CD4-positive, alpha-beta T cell (primary cell): ENCODE measurements at regions of chr2 and their contacts with region 1.

Region 1: DNA sequence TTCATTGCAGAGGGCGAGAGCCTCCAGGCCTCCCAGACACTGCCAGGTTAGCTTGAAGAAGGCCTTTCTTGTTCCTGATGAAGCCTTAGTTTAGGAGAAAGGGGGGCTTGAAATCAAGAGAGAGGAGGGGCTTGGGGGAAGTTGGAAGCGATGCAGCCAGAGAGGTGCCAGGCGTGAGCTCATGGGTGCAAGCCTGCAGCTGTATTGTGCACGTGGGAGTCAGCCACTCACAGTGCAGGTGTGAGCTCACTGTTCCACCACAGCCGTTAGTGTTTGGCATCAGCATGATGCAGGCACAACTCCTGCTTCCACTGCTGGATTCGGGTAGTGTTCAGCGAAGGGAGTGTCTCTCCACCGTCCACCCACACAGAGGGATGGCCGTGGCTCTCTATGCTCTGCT is 68.4 kb upstream of the ALPP start:
- DNase-seq: peak in 6 of 14 experiments; percentile 23 to 59 (median 46)
- ATAC-seq: peak; percentile 78
- H3K4me3 ChIP-seq: no peak overlapping the region
- H3K4me3 Mint-ChIP-seq: peak overlapping the region; percentile 65
- H3K27ac ChIP-seq: peak overlapping the region in 1 of 2 donors; percentile 51
- H3K27ac Mint-ChIP-seq: peak overlapping the region; percentile 89
- H3K4me1 ChIP-seq: peaks cover 53% of the 10 kb centered on the region
- H3K4me1 Mint-ChIP-seq: peaks cover 78% of the 10 kb centered on the region
- H3K27me3 ChIP-seq: no peaks in the 10 kb centered on the region
- H3K27me3 Mint-ChIP-seq: no peaks in the 10 kb centered on the region
- CTCF ChIP-seq: no peak

Region 2: DNA sequence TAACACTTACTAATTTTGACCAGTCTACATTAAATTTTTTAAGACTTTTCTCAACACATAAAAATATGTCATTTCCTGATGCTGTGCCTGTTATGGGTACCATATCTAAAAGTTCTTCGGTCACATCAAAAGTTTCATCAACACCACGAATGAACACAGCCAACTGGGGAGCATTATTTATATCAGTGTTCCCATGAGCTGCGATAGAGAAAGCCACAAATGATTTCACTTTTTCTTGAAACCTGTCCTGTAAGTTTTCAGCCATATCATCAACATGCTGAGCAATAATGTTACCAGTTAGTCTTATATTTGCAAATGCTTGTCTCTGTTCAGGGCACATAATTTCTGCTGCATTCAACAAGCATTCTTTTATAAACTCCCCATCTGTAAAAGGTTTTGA is 815.5 kb before region 1 on chr2:
- CTCF ChIA-PET with region 1: no interaction called
- POLR2A ChIA-PET with region 1: no interaction called
- intact Hi-C with region 1: no loop called
- DNase-seq: no peak
- ATAC-seq: no peak
- H3K4me3 ChIP-seq: no peak overlapping the region
- H3K4me3 Mint-ChIP-seq: no peak overlapping the region
- H3K27ac ChIP-seq: no peak overlapping the region
- H3K27ac Mint-ChIP-seq: no peak overlapping the region
- H3K4me1 ChIP-seq: no peaks in the 10 kb centered on the region
- H3K4me1 Mint-ChIP-seq: no peaks in the 10 kb centered on the region
- H3K27me3 ChIP-seq: no peaks in the 10 kb centered on the region
- H3K27me3 Mint-ChIP-seq: no peaks in the 10 kb centered on the region
- CTCF ChIP-seq: no peak

Region 3: DNA sequence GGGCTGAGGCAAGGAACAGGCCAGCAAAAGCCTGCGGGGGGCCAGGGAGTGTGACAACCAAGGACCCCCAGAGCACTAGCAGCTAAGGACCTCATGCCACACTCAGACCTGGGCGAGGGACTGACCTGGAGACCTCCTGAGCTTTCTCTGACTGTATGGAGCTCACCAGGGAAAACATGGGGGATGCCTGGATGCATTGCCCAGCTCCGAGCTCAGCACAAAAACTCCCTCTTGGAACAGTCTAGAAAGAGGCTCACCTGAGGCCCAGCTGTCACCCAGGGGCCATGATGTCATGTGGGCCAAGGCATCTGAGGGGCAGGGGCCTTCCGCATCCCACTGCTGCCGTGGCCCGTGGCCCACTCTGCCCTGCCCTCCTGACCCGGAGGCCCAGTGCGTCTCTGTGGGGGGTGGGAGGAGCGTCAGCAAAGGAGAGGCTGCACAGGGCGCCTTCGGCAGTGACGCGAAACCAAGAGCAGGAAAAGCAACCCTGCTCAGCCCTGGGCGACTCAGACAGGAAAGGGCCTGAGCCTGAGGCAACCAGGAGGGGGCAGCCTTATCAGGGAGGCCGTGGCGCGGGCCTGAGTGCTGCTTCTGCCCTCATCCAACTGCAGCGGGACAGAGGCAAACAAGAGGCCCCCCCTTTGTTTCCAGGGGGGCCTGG is 11.2 kb after region 1 on chr2:
- CTCF ChIA-PET with region 1: interaction called, 4 read pairs
- POLR2A ChIA-PET with region 1: interaction called, 12 read pairs
- intact Hi-C with region 1: no loop called
- DNase-seq: peak in 13 of 14 experiments; percentile 25 to 76 (median 49)
- ATAC-seq: peak; percentile 75
- H3K4me3 ChIP-seq: no peak overlapping the region
- H3K4me3 Mint-ChIP-seq: no peak overlapping the region
- H3K27ac ChIP-seq: peak overlapping the region; percentile 21 to 76
- H3K27ac Mint-ChIP-seq: peak overlapping the region; percentile 90
- H3K4me1 ChIP-seq: peaks cover 75% of the 10 kb centered on the region
- H3K4me1 Mint-ChIP-seq: peaks cover 75% of the 10 kb centered on the region
- H3K27me3 ChIP-seq: no peaks in the 10 kb centered on the region
- H3K27me3 Mint-ChIP-seq: no peaks in the 10 kb centered on the region
- CTCF ChIP-seq: peak; percentile 58